ENCODE measurements at regions of chr18 and their contacts with region 1.

Region 1: GRCh38 chr18:34809451-34810072 is 99.5 kb downstream of the DTNA start:
- DNase-seq: peak; percentile 75
- ATAC-seq: peak; percentile 71
- H3K4me3 Mint-ChIP-seq: no peak overlapping the region
- H3K27ac Mint-ChIP-seq: no peak overlapping the region
- H3K4me1 Mint-ChIP-seq: peaks cover 6% of the 10 kb centered on the region
- H3K27me3 Mint-ChIP-seq: no peaks in the 10 kb centered on the region
- CTCF ChIP-seq: peak; percentile 65

Region 2: DNA sequence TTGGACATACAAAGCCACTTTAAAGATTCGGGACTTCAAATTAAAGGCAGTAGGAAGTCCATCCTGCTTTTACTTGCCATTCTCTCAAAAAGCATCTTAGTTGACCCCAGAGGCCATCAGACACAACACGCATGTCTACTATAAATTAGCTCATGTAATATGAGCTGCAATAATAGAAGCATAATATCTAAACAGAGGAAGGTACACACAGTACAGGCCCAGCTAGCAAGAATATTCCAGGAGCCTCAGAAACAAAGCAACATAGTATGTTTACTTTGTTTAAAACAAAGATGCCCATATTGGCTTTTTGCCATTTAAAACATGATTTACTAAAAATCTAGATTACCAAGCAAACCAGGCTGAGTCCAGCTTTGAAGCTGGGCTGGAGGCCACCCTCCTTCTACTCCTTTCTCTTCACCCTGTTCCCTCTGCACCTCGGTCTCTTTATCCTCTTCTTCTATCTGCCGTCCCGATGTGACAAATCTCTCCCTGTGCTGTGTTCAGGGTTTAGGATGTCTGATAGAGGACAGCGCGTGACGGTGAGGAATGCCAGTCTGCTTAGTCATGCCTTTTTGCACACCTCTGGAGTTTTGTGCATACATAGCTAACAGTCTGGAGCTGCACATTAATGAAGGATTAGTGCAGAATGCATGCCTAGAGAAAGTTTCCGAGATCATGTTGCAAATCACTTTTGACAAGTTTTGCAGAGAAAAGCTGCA is 71.2 kb before region 1 on chr18:
- CTCF ChIA-PET with region 1: no interaction called
- POLR2A ChIA-PET with region 1: no interaction called
- DNase-seq: no peak
- ATAC-seq: no peak
- H3K4me3 Mint-ChIP-seq: no peak overlapping the region
- H3K27ac Mint-ChIP-seq: no peak overlapping the region
- H3K4me1 Mint-ChIP-seq: peaks cover 19% of the 10 kb centered on the region
- H3K27me3 Mint-ChIP-seq: no peaks in the 10 kb centered on the region
- CTCF ChIP-seq: no peak

Region 3: GRCh38 chr18:34820360-34821065 is 11.0 kb after region 1 on chr18:
- CTCF ChIA-PET with region 1: interaction called, 13 read pairs
- POLR2A ChIA-PET with region 1: interaction called, 4 read pairs
- DNase-seq: no peak
- ATAC-seq: peak; percentile 81
- H3K4me3 Mint-ChIP-seq: no peak overlapping the region
- H3K27ac Mint-ChIP-seq: no peak overlapping the region
- H3K4me1 Mint-ChIP-seq: peaks cover 12% of the 10 kb centered on the region
- H3K27me3 Mint-ChIP-seq: no peaks in the 10 kb centered on the region
- CTCF ChIP-seq: no peak